GM12878 (cell line): ENCODE measurements at regions of chr21 and their contacts with region 1.

Region 1: DNA sequence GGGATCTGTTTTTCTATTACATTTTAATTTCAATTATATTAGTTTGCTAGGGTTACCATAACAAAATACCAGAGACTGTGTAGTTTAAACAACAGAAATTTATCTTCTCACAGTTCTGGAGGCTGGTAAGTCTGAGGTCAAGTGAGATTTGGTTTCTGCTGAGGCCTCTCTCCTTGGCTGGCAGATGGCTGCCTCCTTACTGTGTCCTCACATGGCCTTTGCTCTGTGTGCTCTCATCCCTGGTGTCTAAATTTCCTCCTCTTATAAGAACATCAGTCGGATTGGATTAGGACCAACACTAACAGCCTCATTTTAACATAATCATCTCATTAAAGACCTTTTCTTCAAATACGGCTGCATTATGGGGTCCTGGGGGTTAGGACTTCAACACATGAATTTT is 195.2 kb upstream of the CHODL start:
- DNase-seq: no peak
- ATAC-seq: no peak
- H3K4me3 ChIP-seq: no peak overlapping the region
- H3K27ac ChIP-seq: no peak overlapping the region
- H3K4me1 ChIP-seq: no peaks in the 10 kb centered on the region
- H3K27me3 ChIP-seq: no peaks in the 10 kb centered on the region
- CTCF ChIP-seq: no peak
- EP300 ChIP-seq: no peak
- POLR2A ChIP-seq: no peak
- RAD21 ChIP-seq: no peak

Region 2: GRCh38 chr21:18114810-18115209 is 65.3 kb after region 1 on chr21:
- CTCF ChIA-PET with region 1: no interaction called
- POLR2A ChIA-PET with region 1: no interaction called
- RAD21 ChIA-PET with region 1: no interaction called
- SMC1A ChIA-PET with region 1: no interaction called
- in situ Hi-C with region 1: no loop called
- intact Hi-C with region 1: loop called (anchors 1 kb)
- DNase-seq: no peak
- ATAC-seq: no peak
- H3K4me3 ChIP-seq: no peak overlapping the region
- H3K27ac ChIP-seq: no peak overlapping the region
- H3K4me1 ChIP-seq: no peaks in the 10 kb centered on the region
- H3K27me3 ChIP-seq: no peaks in the 10 kb centered on the region
- CTCF ChIP-seq: no peak
- EP300 ChIP-seq: no peak
- POLR2A ChIP-seq: no peak
- RAD21 ChIP-seq: no peak

Region 3: DNA sequence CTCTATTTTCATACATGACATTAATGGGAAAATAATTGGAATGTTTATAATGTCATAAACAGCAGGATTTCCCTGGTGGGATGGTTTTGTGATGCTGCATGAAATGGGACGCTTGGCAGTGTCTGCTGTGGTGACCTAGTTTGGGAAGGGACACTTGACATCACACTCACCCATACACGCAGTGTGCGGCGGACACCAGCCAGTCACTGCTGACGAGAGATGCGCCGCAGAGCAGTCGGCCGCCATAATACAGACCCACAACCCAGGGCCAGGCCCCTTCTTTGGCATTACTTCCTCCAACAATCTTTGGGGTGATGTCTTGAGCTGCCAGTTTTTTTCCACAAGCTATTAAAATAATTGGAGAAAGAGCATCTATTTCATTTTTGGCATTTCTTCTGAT is 244.6 kb after region 1 on chr21:
- CTCF ChIA-PET with region 1: no interaction called
- POLR2A ChIA-PET with region 1: no interaction called
- RAD21 ChIA-PET with region 1: no interaction called
- SMC1A ChIA-PET with region 1: no interaction called
- in situ Hi-C with region 1: no loop called
- intact Hi-C with region 1: no loop called
- DNase-seq: no peak
- ATAC-seq: no peak
- H3K4me3 ChIP-seq: no peak overlapping the region
- H3K27ac ChIP-seq: no peak overlapping the region
- H3K4me1 ChIP-seq: no peaks in the 10 kb centered on the region
- H3K27me3 ChIP-seq: no peaks in the 10 kb centered on the region
- CTCF ChIP-seq: no peak
- EP300 ChIP-seq: no peak
- POLR2A ChIP-seq: no peak
- RAD21 ChIP-seq: no peak